Activated CD4-positive, alpha-beta T cell treated with anti-CD3 and anti-CD28 coated beads, Interleukin-2, amount 10 ng/mL, durations not matched to agents 24 days and 14 days (primary cell): ENCODE measurements at regions of chr7 and their contacts with region 1.

Region 1: GRCh38 chr7:24907311-24907886 is 72.6 kb downstream of the OSBPL3 start:
- DNase-seq: peak; percentile 84
- H3K4me3 Mint-ChIP-seq: no peak overlapping the region
- H3K27ac Mint-ChIP-seq: no peak overlapping the region
- H3K4me1 Mint-ChIP-seq: peaks cover 33% of the 10 kb centered on the region
- H3K27me3 Mint-ChIP-seq: no peaks in the 10 kb centered on the region

Region 2: DNA sequence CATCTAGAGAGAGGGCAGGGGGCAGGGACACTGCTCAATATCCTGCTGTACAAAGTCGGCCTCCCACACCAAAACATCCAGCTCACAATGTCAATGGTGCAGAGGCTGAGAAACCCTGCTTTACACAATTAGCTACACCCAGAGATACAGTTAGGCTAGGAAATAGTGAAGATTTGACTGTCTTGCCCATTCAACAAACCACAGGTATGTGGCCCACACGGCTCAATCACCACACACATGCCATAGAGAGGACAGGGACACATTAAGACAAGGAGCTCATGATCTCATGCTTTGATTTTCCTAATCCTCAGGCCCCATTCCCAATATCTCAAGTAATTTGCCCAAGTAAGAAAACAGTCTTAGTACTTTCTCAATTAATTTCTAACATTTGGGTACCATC is 37.8 kb before region 1 on chr7:
- intact Hi-C with region 1: loop called (anchors 1 kb)
- DNase-seq: no peak
- H3K4me3 Mint-ChIP-seq: no peak overlapping the region
- H3K27ac Mint-ChIP-seq: peak overlapping the region; percentile 2
- H3K4me1 Mint-ChIP-seq: peaks cover 43% of the 10 kb centered on the region
- H3K27me3 Mint-ChIP-seq: no peaks in the 10 kb centered on the region

Region 3: GRCh38 chr7:24877790-24878311 is 29.5 kb before region 1 on chr7:
- intact Hi-C with region 1: loop called (anchors 1 kb)
- DNase-seq: peak; percentile 76
- H3K4me3 Mint-ChIP-seq: peak overlapping the region; percentile 73
- H3K27ac Mint-ChIP-seq: peak overlapping the region; percentile 84
- H3K4me1 Mint-ChIP-seq: peaks cover 47% of the 10 kb centered on the region
- H3K27me3 Mint-ChIP-seq: no peaks in the 10 kb centered on the region

Region 4: GRCh38 chr7:24921362-24921679 is 13.9 kb after region 1 on chr7:
- intact Hi-C with region 1: loop called (anchors 1 kb)
- DNase-seq: peak; percentile 79
- H3K4me3 Mint-ChIP-seq: peak overlapping the region; percentile 64
- H3K27ac Mint-ChIP-seq: peak overlapping the region; percentile 92
- H3K4me1 Mint-ChIP-seq: peaks cover 88% of the 10 kb centered on the region
- H3K27me3 Mint-ChIP-seq: no peaks in the 10 kb centered on the region

Region 5: GRCh38 chr7:25028370-25029021 is 121.1 kb after region 1 on chr7:
- intact Hi-C with region 1: loop called (anchors 2 kb)
- DNase-seq: peak; percentile 82
- H3K4me3 Mint-ChIP-seq: peak overlapping the region; percentile 48
- H3K27ac Mint-ChIP-seq: peak overlapping the region; percentile 87
- H3K4me1 Mint-ChIP-seq: peaks cover 45% of the 10 kb centered on the region
- H3K27me3 Mint-ChIP-seq: peaks cover 10% of the 10 kb centered on the region